AG04449 (cell line): ENCODE measurements at regions of chr11 and their contacts with region 1.

Region 1: DNA sequence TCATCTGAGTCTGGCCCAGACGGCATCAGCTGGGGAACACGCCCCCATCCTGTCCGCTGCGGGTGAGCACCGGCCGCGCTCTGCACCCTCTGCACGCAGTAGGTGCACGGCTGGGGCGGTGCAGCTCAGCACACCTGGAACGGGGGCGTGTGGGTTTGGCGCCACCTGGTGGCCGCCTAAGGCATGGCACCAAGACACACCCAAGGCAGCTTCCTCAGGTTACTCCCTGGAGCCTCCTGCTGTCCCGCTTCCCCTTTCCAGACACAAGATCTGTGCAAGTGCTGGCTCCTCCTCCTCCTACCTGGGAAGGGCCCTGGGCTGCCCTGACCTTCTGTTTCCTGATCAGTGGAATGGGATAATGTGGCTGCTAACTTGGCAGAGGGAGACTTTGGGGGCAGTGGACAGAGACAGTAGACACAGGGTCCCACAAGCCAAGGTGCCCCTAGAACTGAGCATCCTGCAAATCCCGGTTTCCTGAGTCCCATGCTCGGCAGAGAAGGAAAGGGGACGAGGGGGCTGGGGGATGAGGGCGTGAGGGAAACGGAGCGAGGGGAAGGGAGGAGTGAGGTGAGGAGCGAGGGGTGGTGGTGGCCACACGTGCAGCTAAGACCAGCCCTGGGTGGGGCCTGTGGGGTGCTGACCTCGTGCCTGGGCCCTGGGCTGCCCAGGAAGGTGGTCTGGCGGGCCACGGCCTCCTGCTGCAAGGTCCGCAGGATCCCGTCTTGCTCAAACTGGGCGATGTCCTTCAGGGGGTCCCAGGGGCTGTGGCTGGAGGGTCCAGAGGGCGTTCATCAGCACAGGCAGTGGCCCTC is 34.8 kb upstream of the CARS1 start:
- DNase-seq: no peak
- H3K4me3 ChIP-seq: no peak overlapping the region
- CTCF ChIP-seq: peak; percentile 98

Region 2: GRCh38 chr11:2428322-2428795 is 663.6 kb before region 1 on chr11:
- CTCF ChIA-PET with region 1: no interaction called
- POLR2A ChIA-PET with region 1: no interaction called
- DNase-seq: no peak
- H3K4me3 ChIP-seq: no peak overlapping the region
- CTCF ChIP-seq: peak; percentile 77

Region 3: GRCh38 chr11:2975594-2975993 is 116.4 kb before region 1 on chr11:
- CTCF ChIA-PET with region 1: interaction called, 12 read pairs
- POLR2A ChIA-PET with region 1: no interaction called
- DNase-seq: no peak
- H3K4me3 ChIP-seq: no peak overlapping the region
- CTCF ChIP-seq: peak; percentile 60

Region 4: GRCh38 chr11:3021125-3021524 is 70.9 kb before region 1 on chr11:
- CTCF ChIA-PET with region 1: interaction called, 18 read pairs
- POLR2A ChIA-PET with region 1: no interaction called
- DNase-seq: no peak
- H3K4me3 ChIP-seq: no peak overlapping the region
- CTCF ChIP-seq: peak; percentile 47

Region 5: DNA sequence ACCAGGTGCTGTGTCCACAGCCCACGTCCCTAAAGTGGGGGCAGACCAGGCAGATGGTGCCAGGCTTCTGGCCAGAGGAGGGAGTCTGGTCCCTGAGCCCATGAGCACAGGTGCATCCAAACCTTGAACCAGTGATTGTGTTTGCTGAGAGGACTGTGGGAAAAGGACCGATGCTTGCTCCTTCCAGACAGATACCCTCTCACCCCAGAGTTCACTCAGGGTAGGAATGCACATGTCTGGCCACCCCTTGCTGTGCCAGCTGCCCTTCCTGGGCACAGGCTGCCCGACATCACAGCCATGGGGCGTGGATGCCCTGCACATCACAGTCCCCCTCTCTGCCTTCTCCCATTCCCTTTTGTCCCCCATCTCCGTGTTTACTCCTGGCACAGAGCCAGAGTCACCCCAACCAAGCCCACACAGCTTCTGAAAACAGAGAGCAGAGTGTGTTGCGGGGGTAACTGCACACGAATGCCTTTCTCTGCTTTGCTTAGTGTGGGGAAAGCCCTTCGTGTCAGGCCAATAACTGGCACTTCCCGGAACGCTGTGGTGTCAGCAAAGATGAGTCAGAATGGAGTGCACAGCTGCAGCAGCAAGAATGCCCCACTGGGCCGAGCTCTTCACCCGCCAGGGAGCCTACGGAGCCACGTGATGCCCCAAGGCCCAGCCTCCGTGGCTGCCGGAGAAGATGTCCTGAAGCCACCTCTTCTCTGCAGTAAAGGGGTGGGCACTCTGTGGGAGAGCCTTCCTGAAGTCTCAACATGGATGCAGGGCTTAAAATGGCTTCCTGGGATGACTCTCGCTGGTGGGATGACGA is 42.4 kb before region 1 on chr11:
- CTCF ChIA-PET with region 1: interaction called, 109 read pairs
- POLR2A ChIA-PET with region 1: no interaction called
- DNase-seq: peak; percentile 79
- H3K4me3 ChIP-seq: peak overlapping the region; percentile 41
- CTCF ChIP-seq: peak; percentile 53

Region 6: DNA sequence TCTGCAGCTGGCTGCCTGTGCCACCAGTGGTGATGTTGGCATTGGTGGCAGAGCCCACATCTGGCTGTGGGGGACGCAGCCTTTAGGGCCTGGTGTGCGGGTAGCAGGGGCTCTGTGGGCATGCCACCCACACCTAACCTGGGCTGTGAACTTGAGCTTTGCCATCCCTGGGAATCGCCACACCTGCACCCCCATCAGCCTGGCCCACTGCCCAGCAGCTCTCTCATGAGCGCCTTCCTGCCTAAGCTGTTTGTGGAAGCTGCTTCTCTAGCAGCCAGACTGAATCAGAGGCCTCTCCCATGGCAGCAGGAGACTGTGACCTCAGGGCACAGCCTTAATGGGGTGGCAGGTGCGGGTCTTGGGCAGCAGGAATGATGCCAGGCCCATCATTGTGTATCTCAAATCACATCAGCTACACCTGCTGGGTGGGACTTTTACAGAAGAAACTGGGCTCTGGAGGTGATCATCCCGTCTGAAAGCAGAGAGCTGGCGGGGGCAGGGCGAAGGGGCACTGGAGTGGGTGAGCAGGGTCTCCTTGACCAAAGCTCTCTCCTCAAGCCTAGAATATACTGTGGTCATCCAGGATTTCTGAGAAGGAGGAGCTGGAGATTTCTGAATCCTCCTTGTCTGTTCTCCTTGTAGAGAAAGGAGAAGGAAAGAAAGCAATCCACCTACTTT is 16.9 kb before region 1 on chr11:
- CTCF ChIA-PET with region 1: interaction called, 40 read pairs
- POLR2A ChIA-PET with region 1: no interaction called
- DNase-seq: no peak
- H3K4me3 ChIP-seq: no peak overlapping the region
- CTCF ChIP-seq: no peak

Region 7: GRCh38 chr11:3104051-3104714 is 12.2 kb after region 1 on chr11:
- CTCF ChIA-PET with region 1: interaction called, 32 read pairs
- POLR2A ChIA-PET with region 1: interaction called, 3 read pairs
- DNase-seq: no peak
- H3K4me3 ChIP-seq: no peak overlapping the region
- CTCF ChIP-seq: no peak

Region 8: GRCh38 chr11:3115321-3115720 is 23.3 kb after region 1 on chr11:
- CTCF ChIA-PET with region 1: interaction called, 22 read pairs
- POLR2A ChIA-PET with region 1: no interaction called
- DNase-seq: no peak
- H3K4me3 ChIP-seq: no peak overlapping the region
- CTCF ChIP-seq: no peak

Region 9: DNA sequence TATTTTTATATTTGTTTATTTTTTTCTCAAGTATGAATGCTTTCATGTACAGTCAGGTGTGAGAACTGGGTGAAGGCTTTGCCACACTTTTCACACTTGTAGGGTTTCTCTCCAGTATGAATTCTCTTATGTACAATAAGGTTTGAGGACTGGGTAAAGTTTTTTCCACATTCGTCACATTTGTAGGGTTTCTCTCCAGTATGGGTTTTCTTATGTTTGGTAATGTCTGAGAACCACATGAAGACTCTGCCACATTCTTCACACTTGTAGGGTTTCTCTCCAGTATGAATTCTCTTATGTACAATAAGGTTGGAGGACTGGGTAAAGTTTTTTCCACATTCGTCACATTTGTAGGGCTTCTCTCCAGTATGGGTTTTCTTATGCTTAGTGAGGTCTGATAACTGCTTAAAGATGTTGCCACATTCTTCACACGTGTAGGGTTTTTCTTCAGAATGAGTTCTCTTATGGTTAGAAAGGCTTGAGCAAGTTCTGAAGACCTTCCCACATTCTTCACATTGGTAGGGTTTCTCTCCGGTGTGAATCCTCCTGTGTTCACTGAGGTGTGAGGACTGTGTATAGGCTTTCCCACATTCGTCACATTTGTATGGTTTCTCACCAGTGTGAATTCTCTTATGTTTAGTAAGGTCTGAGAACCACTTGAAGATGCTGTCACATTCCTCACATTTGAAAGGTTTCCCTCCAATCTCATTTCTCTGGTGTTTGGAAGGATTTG is 267.3 kb after region 1 on chr11:
- CTCF ChIA-PET with region 1: no interaction called
- POLR2A ChIA-PET with region 1: no interaction called
- DNase-seq: no peak
- H3K4me3 ChIP-seq: no peak overlapping the region
- CTCF ChIP-seq: no peak